Activated CD8-positive, alpha-beta T cell treated with anti-CD3 and anti-CD28 coated beads for 36 hours (primary cell): ENCODE measurements at regions of chr12 and their contacts with region 1.

Region 1: GRCh38 chr12:68236421-68237059 is 10.9 kb upstream of the IL26 start:
- DNase-seq: peak; percentile 54
- ATAC-seq: peak; percentile 56
- H3K4me3 Mint-ChIP-seq: peak overlapping the region; percentile 76
- H3K27ac Mint-ChIP-seq: peak overlapping the region; percentile 86
- H3K4me1 Mint-ChIP-seq: peaks cover 55% of the 10 kb centered on the region
- H3K27me3 Mint-ChIP-seq: no peaks in the 10 kb centered on the region
- CTCF ChIP-seq: no peak

Region 2: GRCh38 chr12:68031881-68032739 is 204.4 kb before region 1 on chr12:
- CTCF ChIA-PET with region 1: no interaction called
- POLR2A ChIA-PET with region 1: no interaction called
- intact Hi-C with region 1: no loop called
- DNase-seq: no peak
- ATAC-seq: peak; percentile 63
- H3K4me3 Mint-ChIP-seq: peak overlapping the region; percentile 57
- H3K27ac Mint-ChIP-seq: peak overlapping the region; percentile 76
- H3K4me1 Mint-ChIP-seq: peaks cover 46% of the 10 kb centered on the region
- H3K27me3 Mint-ChIP-seq: no peaks in the 10 kb centered on the region
- CTCF ChIP-seq: no peak

Region 3: GRCh38 chr12:68100232-68100631 is 136.3 kb before region 1 on chr12:
- CTCF ChIA-PET with region 1: no interaction called
- POLR2A ChIA-PET with region 1: no interaction called
- intact Hi-C with region 1: no loop called
- DNase-seq: no peak
- ATAC-seq: no peak
- H3K4me3 Mint-ChIP-seq: no peak overlapping the region
- H3K27ac Mint-ChIP-seq: no peak overlapping the region
- H3K4me1 Mint-ChIP-seq: peaks cover 1% of the 10 kb centered on the region
- H3K27me3 Mint-ChIP-seq: no peaks in the 10 kb centered on the region
- CTCF ChIP-seq: no peak

Region 4: GRCh38 chr12:68279227-68280054 is 42.9 kb after region 1 on chr12:
- CTCF ChIA-PET with region 1: interaction called, 5 read pairs
- POLR2A ChIA-PET with region 1: interaction called, 3 read pairs
- intact Hi-C with region 1: loop called (anchors 5 kb)
- DNase-seq: no peak
- ATAC-seq: peak; percentile 11
- H3K4me3 Mint-ChIP-seq: no peak overlapping the region
- H3K27ac Mint-ChIP-seq: no peak overlapping the region
- H3K4me1 Mint-ChIP-seq: peaks cover 51% of the 10 kb centered on the region
- H3K27me3 Mint-ChIP-seq: peaks cover 4% of the 10 kb centered on the region
- CTCF ChIP-seq: no peak